ENCODE measurements at regions of chr2 and their contacts with region 1.

Region 1: GRCh38 chr2:201071479-201072200 is at the starts of genes HYCC2 and NDUFB3:
- DNase-seq: peak; percentile 89 to 93
- H3K4me3 ChIP-seq: peak within 1 kb of the TSS; percentile 89 to 90
- H3K27ac ChIP-seq: peak within 1 kb of the TSS; percentile 81 to 84
- H3K4me1 ChIP-seq: peaks cover 0 to 47% (median 25%) of the 10 kb centered on the region in 4 donors
- H3K27me3 ChIP-seq: no peaks in the 10 kb centered on the region
- CTCF ChIP-seq: peak in 1 of 2 experiments; percentile 32

Region 2: DNA sequence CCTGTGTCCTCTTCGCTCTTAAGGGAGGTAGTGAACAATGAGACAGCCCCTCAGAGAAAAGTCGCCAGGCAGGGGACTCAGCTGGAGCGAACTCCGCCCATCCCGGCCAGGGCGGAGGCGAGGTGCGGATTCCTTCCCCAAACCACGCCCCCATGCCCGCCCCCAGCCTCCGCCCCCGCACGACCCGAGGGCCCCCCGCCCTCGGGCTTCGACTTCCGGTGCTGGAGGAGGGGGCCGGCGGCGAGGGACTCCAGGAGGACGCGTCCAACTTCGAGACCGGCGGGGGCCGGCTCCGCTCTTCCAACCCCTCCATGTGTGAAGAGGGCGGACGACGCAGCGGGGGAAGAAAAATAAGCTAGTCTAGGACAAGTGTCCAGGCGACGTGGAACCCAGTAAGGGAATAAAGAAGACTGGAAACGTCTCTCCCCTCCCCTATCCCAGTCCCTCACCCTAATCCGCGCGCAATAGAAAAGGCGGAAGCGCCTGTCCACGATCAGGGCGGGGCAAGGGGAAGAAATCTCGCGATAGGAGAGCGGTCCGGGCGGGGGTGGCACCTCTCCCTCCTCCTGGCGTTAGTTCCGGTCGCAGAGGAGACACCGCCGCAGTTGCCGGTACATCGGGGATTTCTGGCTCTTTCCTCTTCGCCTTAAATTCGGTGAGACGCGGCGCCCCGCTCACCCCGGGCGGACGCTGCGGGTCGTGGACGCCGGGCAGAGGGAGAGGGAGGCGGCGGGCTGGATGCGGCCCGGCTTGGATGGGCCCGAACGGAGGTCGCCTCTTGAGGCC is 260.1 kb before region 1 on chr2 and contains the start of gene BZW1:
- intact Hi-C with region 1: loop called (anchors 5 kb)
- DNase-seq: peak; percentile 93 to 98
- H3K4me3 ChIP-seq: peak within 1 kb of the TSS; percentile 84 to 100
- H3K27ac ChIP-seq: peak within 1 kb of the TSS; percentile 94 to 100
- H3K4me1 ChIP-seq: peaks cover 0 to 48% (median 34%) of the 10 kb centered on the region in 4 donors
- H3K27me3 ChIP-seq: no peaks in the 10 kb centered on the region
- CTCF ChIP-seq: no peak

Region 3: DNA sequence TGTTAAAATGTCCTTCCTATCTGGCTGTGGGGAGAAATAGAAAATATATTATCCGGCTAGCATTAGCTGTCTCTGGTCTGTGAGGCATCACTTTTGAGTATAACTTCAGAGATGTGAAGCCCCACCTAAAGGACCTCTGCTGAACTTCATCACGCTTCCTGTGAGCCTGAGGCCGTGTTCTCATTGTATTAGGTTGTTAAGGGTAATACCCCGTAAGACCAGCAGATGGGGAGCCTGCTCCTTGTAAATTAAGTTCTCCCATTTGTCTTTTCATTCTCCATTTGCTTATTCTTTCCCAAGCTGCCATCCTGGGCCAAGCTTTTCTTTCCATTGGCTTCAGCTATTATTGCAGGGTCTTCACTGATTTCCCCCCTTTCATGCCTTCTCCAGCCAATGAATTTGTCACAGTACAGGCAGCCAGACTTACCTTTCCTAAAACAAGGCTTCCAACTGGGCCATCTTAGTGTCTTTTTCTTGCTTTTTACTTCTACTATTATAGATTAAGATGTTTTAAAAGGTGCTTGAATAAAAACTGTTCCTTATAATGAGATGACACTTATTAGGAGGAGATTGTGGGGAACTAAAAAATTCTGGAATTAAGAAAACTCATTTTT is 170.1 kb before region 1 on chr2:
- intact Hi-C with region 1: loop called (anchors 10 kb)
- DNase-seq: peak in 1 of 2 donors; percentile 77
- H3K4me3 ChIP-seq: no peak overlapping the region
- H3K27ac ChIP-seq: no peak overlapping the region
- H3K4me1 ChIP-seq: no peaks in the 10 kb centered on the region
- H3K27me3 ChIP-seq: no peaks in the 10 kb centered on the region
- CTCF ChIP-seq: peak; percentile 63 to 70

Region 4: DNA sequence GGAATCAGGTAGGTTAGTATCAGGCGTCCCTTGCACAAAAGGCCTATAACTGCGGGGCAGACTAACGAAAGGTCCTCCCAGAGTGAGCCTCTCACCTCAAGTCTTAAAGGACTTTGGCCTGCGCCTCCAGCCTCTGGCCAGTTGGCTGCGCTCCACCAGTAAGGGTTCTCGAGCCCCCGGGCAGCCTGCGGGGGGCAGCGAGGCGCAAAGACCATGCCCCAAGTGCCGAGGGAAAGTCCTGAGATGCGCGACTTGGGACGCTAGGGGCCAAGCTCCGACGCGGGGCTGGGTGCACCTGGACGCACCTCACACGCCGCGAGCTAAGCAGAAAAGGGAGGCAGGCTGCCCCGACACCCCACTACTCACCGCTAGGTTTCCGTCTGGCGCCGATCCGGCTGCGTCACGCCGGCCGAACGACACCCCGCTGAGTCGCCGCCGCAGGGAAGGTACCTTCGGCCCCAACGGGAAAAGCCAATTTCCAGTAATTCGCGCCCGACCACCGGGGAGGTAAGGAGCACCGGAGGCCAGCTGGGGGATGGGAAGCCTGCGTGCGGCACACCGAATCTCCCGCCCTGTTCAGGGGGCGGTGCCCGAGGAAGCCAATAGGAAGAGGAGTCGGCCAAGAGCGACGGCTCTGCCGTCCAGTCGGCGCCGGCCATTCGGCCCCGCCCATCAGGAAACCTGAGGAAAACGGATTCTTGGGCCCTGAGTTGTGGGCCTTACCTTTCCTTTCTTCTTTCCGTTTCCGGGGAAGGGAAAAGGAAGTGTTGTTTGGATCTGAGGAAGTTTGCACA is 108.3 kb before region 1 on chr2 and contains the start of gene ORC2:
- intact Hi-C with region 1: loop called (anchors 10 kb)
- DNase-seq: peak; percentile 95 to 97
- H3K4me3 ChIP-seq: peak within 1 kb of the TSS; percentile 78 to 87
- H3K27ac ChIP-seq: peak within 1 kb of the TSS; percentile 86 to 87
- H3K4me1 ChIP-seq: peaks cover 0 to 27% (median 22%) of the 10 kb centered on the region in 4 donors
- H3K27me3 ChIP-seq: no peaks in the 10 kb centered on the region
- CTCF ChIP-seq: peak; percentile 65 to 74

Region 5: DNA sequence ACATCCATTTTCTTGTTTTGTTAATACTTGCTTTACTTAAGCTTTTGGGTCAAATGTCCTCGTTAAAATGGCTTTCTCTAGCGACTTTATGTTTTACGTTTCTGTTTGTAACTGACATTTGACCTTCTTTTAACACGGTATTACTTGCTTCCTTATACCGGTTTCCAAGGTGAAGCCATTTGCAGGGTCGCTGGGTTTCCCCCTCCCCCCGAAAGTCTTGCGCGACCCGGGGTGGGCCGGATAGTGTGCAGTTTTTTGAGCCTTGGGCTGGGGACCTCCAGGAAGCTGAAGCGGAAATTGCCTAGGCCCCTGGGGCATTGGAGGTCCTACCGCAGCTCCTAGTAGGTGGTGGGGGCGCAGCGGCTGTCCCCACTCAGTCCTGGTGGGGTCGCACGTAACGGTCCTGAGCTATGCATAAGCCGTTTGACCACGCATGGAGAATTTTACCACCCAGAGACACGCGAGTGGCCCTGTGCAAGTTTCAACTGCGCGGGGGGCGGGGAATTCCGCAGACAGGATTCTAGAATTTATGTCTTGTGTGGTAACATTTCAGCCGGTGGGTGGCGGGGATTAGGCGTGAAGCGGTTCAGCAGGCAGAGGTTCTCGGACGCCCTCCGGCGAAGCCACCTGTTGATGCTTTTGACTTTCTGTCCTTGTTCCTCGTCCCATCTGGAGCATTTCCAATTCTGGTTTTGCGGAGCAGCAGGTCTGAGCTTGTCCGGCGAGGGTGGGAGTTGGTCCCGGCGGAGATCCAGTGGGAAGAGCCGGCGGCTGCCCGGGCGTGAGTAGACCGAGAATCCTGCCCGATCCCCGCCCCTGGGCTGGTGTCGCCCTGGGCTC is 46.7 kb after region 1 on chr2:
- intact Hi-C with region 1: loop called (anchors 1 kb)
- DNase-seq: peak; percentile 91
- H3K4me3 ChIP-seq: peak overlapping the region; percentile 95 to 98
- H3K27ac ChIP-seq: peak overlapping the region; percentile 100
- H3K4me1 ChIP-seq: peaks cover 0 to 56% (median 12%) of the 10 kb centered on the region in 4 donors
- H3K27me3 ChIP-seq: no peaks in the 10 kb centered on the region
- CTCF ChIP-seq: peak; percentile 43 to 53

Measured in tibial artery (tissue), 4 donors.